ENCODE measurements at regions of chr2 and their contacts with region 1.

Region 1: GRCh38 chr2:13006829-13007717 is 290.3 kb downstream of the TRIB2 start:
- DNase-seq: peak; percentile 34
- CTCF ChIP-seq: peak; percentile 55

Region 2: GRCh38 chr2:11829947-11830707 is 1176.9 kb before region 1 on chr2:
- CTCF ChIA-PET with region 1: interaction called, 13 read pairs
- POLR2A ChIA-PET with region 1: no interaction called
- DNase-seq: peak; percentile 69
- CTCF ChIP-seq: peak; percentile 22

Region 3: GRCh38 chr2:11863513-11864328 is 1143.4 kb before region 1 on chr2:
- CTCF ChIA-PET with region 1: interaction called, 10 read pairs
- POLR2A ChIA-PET with region 1: no interaction called
- DNase-seq: peak; percentile 78
- CTCF ChIP-seq: peak; percentile 79

Region 4: GRCh38 chr2:12931186-12931844 is 75.8 kb before region 1 on chr2:
- CTCF ChIA-PET with region 1: interaction called, 11 read pairs
- POLR2A ChIA-PET with region 1: no interaction called
- DNase-seq: peak; percentile 22
- CTCF ChIP-seq: peak; percentile 70

Region 5: DNA sequence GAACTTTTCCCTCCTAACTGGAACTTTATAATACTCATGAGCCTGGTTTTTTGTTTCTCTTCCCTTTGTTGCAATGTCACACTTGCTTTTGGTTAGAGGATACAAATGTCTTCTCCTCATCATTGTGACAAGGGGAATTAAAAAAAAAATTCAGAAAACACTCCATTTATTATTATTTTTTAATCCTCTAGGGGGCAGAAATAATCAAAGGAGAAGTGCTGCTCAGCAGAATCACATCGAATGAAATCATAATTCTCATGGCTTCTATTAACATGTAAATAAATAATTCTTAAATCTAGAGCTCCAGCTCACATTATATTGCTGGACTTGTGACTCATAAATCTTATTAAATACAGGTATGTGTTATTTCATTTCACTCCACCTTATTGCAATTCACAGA is 16.6 kb before region 1 on chr2:
- CTCF ChIA-PET with region 1: interaction called, 11 read pairs
- POLR2A ChIA-PET with region 1: no interaction called
- DNase-seq: no peak
- CTCF ChIP-seq: peak; percentile 1

Region 6: DNA sequence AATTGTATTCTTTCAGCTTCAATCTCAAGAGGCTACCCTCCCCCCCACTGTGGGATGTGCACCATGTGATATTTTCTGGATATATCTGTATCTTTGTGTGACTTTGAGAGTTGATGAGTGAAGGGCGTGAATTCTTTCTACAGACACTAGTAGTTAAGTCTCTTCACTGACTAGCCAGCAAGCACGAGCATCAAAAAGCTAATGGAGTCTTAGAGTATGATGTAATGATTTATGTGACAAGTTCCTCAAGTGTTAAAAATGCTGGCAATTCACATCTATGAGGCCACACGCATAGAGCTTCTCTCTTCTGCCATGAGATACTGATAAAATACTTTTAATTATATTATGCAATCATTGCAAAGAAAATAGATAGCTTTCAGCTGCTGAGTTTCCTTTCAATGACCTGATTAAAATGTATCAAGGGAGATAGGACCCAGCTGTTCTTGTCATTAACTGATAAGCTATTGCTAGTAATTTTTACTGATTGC is 14.4 kb after region 1 on chr2:
- CTCF ChIA-PET with region 1: interaction called, 13 read pairs
- POLR2A ChIA-PET with region 1: no interaction called
- DNase-seq: no peak
- CTCF ChIP-seq: no peak